T-cell (primary cell): ENCODE measurements at regions of chr5 and their contacts with region 1.

Region 1: DNA sequence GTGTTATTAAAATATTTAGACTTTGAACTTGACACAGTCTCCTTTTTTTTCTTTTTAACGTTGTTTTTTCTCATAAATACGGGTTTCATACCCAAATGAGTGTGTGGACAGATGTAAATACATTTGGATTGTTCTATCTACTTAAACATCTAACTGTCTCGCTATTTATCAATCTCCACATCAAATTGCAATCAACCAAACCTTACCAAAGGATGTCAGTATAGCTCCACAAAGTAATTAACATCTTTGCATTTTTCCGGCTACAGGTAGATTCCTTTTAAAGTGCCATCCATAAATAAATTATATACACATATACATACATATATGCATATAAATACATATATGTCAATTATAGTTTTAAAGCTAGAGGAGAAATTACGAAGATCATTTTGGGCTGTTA is 705 bp upstream of the CDH10 start:
- DNase-seq: no peak
- ATAC-seq: no peak
- H3K4me3 ChIP-seq: no peak overlapping the region
- H3K4me3 Mint-ChIP-seq: no peak overlapping the region
- H3K27ac ChIP-seq: no peak overlapping the region
- H3K27ac Mint-ChIP-seq: no peak overlapping the region
- H3K4me1 ChIP-seq: no peaks in the 10 kb centered on the region
- H3K4me1 Mint-ChIP-seq: no peaks in the 10 kb centered on the region
- H3K27me3 ChIP-seq: no peaks in the 10 kb centered on the region
- H3K27me3 Mint-ChIP-seq: no peaks in the 10 kb centered on the region

Region 2: GRCh38 chr5:24472518-24472917 is 173.0 kb before region 1 on chr5:
- CTCF ChIA-PET with region 1: no interaction called
- POLR2A ChIA-PET with region 1: interaction called in 1 of 2 experiments, 11 read pairs
- DNase-seq: no peak
- ATAC-seq: no peak
- H3K4me3 ChIP-seq: no peak overlapping the region
- H3K4me3 Mint-ChIP-seq: no peak overlapping the region
- H3K27ac ChIP-seq: no peak overlapping the region
- H3K27ac Mint-ChIP-seq: no peak overlapping the region
- H3K4me1 ChIP-seq: no peaks in the 10 kb centered on the region
- H3K4me1 Mint-ChIP-seq: no peaks in the 10 kb centered on the region
- H3K27me3 ChIP-seq: no peaks in the 10 kb centered on the region
- H3K27me3 Mint-ChIP-seq: no peaks in the 10 kb centered on the region